MCF 10A (cell line): ENCODE measurements at regions of chr16 and their contacts with region 1.

Region 1: GRCh38 chr16:46801428-46802049 is 29.4 kb downstream of the C16orf87 start:
- DNase-seq: peak; percentile 31
- H3K4me3 Mint-ChIP-seq: no peak overlapping the region
- H3K27ac Mint-ChIP-seq: no peak overlapping the region
- H3K4me1 Mint-ChIP-seq: peaks cover 6% of the 10 kb centered on the region
- H3K27me3 Mint-ChIP-seq: no peaks in the 10 kb centered on the region
- CTCF ChIP-seq: peak; percentile 21

Region 2: DNA sequence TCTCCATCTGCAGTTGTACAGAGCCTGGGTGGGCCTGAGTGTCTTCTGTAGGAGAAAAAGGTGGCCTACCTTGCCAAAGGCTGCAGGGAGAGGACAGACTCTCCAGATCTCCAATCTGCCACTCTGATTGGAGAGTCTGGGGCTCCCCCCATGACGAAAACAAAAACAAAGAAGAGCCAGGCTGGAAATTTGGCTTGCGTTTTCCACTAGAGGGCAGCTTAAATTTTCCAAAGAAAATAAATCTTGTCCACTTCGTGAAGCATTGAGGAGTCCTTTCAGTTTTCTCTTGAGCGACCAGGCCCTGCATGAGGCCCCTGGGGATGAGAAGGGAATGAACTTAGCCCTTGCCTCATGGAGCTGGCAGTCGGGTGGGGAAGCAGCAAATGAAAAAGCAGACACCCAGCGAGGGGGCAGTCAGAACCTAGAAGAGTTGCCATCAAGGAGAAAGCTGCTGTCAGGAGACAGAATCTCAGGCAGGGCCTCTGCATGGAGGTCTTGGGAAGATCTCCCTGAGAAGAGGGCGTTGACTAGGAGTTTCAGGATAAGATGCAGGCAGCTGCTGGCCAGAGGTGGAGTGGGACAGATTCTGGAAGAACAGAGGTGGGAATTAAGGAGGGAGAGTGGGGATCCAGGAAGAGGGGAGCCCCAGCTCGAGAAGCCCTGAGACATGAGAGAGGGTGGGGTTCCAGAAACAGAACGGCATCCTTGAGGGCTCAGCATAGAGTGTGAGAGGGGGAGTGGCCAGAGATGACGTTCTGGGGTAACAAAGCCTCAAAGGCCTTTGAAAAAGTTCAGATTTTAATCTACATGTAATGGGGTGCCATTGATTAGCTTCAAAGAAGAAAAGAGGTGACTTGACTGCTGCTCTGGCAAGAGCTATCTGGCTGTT is 172.0 kb before region 1 on chr16:
- CTCF ChIA-PET with region 1: interaction called, 14 read pairs
- POLR2A ChIA-PET with region 1: no interaction called
- intact Hi-C with region 1: no loop called
- DNase-seq: peak; percentile 68
- H3K4me3 Mint-ChIP-seq: peak overlapping the region; percentile 22
- H3K27ac Mint-ChIP-seq: peak overlapping the region; percentile 61
- H3K4me1 Mint-ChIP-seq: peaks cover 11% of the 10 kb centered on the region
- H3K27me3 Mint-ChIP-seq: peaks cover 6% of the 10 kb centered on the region
- CTCF ChIP-seq: peak; percentile 50

Region 3: DNA sequence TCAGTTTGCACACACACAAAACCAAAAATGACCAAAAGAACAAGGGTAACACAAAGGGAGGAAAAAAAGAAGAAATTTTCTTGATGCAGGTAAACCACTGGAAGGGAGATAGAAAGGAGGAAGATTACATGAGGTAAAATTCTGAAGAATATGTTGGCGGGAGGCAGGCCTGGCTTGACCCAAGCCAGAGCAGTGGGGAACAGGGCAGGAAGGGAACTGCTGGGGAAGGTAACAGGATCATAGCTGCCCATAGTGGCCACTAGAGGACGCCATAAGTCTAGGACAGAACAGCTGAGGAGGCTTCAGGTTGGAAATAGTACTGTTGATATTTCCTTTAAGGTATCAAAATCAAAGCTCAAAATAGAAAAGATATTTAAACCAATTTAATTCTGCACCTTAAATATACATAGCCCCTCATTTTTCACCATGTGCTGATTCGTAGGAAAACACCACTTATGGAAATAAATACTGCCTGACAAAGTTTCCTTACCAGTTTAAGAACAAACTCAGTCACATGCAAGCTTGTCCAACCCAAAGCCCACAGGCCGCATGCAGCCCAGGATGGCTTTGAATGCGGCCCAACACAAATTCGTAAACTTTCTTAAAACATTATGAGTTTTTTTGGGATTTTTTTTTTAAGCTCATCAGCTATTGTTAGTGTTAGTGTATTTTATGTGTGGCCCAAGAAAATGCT is 128.1 kb before region 1 on chr16:
- CTCF ChIA-PET with region 1: interaction called, 60 read pairs
- POLR2A ChIA-PET with region 1: interaction called, 5 read pairs
- intact Hi-C with region 1: loop called (anchors 1 kb)
- DNase-seq: peak; percentile 69
- H3K4me3 Mint-ChIP-seq: no peak overlapping the region
- H3K27ac Mint-ChIP-seq: no peak overlapping the region
- H3K4me1 Mint-ChIP-seq: no peaks in the 10 kb centered on the region
- H3K27me3 Mint-ChIP-seq: no peaks in the 10 kb centered on the region
- CTCF ChIP-seq: peak; percentile 89

Region 4: DNA sequence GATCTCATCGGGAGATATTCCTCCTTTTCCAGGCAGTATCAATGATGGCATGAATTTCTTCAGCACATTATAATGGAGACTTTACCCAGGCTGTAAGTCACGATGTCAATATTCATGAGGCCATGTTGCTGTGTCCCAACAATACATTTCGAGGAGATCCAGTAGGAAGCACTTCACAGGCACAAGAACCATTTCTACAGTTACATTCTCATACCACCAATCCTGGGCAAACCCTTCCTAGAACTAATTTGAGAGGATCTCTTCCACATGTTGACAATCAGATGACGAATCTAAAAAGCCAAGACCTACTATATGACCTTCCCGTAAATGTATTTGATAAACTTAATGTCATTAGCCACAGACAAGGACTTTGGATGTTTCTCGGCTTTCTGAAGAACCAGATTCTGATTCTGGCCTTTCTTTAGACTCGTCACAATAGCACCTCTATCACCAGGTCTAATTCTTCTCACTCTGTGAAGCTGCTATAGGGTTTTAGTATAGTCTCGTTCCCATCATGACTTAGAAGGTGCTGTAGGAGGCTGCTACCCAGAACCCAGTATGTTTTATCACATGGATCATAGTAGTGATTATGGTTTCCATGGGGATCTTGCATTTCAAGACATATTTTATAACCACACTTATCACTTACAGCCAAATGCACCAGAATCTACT is 10.8 kb before region 1 on chr16:
- CTCF ChIA-PET with region 1: interaction called, 11 read pairs
- POLR2A ChIA-PET with region 1: interaction called, 3 read pairs
- intact Hi-C with region 1: no loop called
- DNase-seq: no peak
- H3K4me3 Mint-ChIP-seq: peak overlapping the region; percentile 36
- H3K27ac Mint-ChIP-seq: no peak overlapping the region
- H3K4me1 Mint-ChIP-seq: no peaks in the 10 kb centered on the region
- H3K27me3 Mint-ChIP-seq: no peaks in the 10 kb centered on the region
- CTCF ChIP-seq: no peak

Region 5: GRCh38 chr16:46812781-46813540 is 11.4 kb after region 1 on chr16:
- CTCF ChIA-PET with region 1: interaction called, 14 read pairs
- POLR2A ChIA-PET with region 1: interaction called, 4 read pairs
- intact Hi-C with region 1: no loop called
- DNase-seq: no peak
- H3K4me3 Mint-ChIP-seq: no peak overlapping the region
- H3K27ac Mint-ChIP-seq: no peak overlapping the region
- H3K4me1 Mint-ChIP-seq: peaks cover 13% of the 10 kb centered on the region
- H3K27me3 Mint-ChIP-seq: no peaks in the 10 kb centered on the region
- CTCF ChIP-seq: no peak